Right lobe of liver (tissue), 6 donors: ENCODE measurements at regions of chr4 and their contacts with region 1.

Region 1: DNA sequence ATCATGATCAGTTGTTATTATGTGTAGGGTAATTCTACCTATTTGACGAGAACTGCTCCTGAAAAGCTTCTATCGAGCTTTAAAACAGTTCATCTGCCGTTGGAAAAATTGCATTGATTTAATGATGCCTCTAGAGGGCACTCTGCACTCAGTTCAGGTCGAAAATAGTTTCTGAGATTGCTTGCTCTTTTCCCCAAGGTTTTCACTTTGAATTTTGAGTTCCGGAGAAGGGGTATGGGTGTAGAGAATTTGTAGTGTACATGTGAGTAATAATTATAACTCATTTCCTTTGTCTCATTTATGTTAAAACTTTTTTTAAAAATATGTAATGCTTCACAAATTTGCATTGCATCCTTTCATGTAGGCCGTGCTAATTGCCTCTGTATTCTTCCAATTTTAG is 28.4 kb upstream of the TNIP3 start:
- DNase-seq: no peak
- ATAC-seq: peak; percentile 61 to 77 (median 72)
- H3K4me3 ChIP-seq: no peak overlapping the region
- H3K27ac ChIP-seq: no peak overlapping the region
- H3K4me1 ChIP-seq: no peaks in the 10 kb centered on the region
- H3K27me3 ChIP-seq: no peaks in the 10 kb centered on the region
- CTCF ChIP-seq: peak; percentile 60 to 78 (median 74)
- POLR2A ChIP-seq: no peak

Region 2: GRCh38 chr4:120977435-120977997 is 215.0 kb before region 1 on chr4:
- intact Hi-C with region 1: no loop called
- DNase-seq: no peak
- ATAC-seq: peak; percentile 33 to 58 (median 52)
- H3K4me3 ChIP-seq: no peak overlapping the region
- H3K27ac ChIP-seq: no peak overlapping the region
- H3K4me1 ChIP-seq: no peaks in the 10 kb centered on the region
- H3K27me3 ChIP-seq: no peaks in the 10 kb centered on the region
- CTCF ChIP-seq: peak in 3 of 4 donors; percentile 20 to 28 (median 27)
- POLR2A ChIP-seq: no peak

Region 3: DNA sequence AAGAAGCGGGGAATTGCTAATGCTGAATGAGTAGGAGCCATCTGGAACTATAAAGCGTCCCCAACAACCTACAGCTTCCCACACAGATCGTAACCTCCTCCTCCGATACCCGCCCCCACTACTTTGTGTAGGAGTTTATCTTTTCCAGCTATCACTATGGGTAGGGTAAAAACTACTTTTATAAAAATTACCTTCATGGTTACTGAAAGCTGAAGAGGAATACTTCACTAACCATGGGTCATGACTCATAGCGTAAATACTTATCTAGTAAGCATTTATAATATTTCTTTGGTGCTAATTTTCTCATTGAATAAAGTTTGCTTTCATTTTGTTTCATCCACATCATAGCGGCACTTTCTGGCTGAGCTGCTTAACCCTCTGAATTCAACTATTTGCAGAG is 51.0 kb after region 1 on chr4:
- intact Hi-C with region 1: loop called in 1 of 2 experiments (anchors 10 kb)
- DNase-seq: no peak
- ATAC-seq: no peak
- H3K4me3 ChIP-seq: no peak overlapping the region
- H3K27ac ChIP-seq: no peak overlapping the region
- H3K4me1 ChIP-seq: no peaks in the 10 kb centered on the region
- H3K27me3 ChIP-seq: no peaks in the 10 kb centered on the region
- CTCF ChIP-seq: no peak
- POLR2A ChIP-seq: no peak

Region 4: GRCh38 chr4:121330180-121330665 is 137.7 kb after region 1 on chr4:
- intact Hi-C with region 1: no loop called
- DNase-seq: no peak
- ATAC-seq: no peak
- H3K4me3 ChIP-seq: no peak overlapping the region
- H3K27ac ChIP-seq: no peak overlapping the region
- H3K4me1 ChIP-seq: no peaks in the 10 kb centered on the region
- H3K27me3 ChIP-seq: no peaks in the 10 kb centered on the region
- CTCF ChIP-seq: no peak
- POLR2A ChIP-seq: no peak